Pancreas (tissue), 10 donors: ENCODE measurements at regions of chr13 and their contacts with region 1.

Region 1: GRCh38 chr13:26719356-26719945 is 41.1 kb downstream of the GPR12 start:
- DNase-seq: no peak
- ATAC-seq: no peak
- H3K4me3 ChIP-seq: no peak overlapping the region
- H3K27ac ChIP-seq: no peak overlapping the region
- H3K4me1 ChIP-seq: no peaks in the 10 kb centered on the region
- H3K27me3 ChIP-seq: no peaks in the 10 kb centered on the region
- CTCF ChIP-seq: no peak

Region 2: DNA sequence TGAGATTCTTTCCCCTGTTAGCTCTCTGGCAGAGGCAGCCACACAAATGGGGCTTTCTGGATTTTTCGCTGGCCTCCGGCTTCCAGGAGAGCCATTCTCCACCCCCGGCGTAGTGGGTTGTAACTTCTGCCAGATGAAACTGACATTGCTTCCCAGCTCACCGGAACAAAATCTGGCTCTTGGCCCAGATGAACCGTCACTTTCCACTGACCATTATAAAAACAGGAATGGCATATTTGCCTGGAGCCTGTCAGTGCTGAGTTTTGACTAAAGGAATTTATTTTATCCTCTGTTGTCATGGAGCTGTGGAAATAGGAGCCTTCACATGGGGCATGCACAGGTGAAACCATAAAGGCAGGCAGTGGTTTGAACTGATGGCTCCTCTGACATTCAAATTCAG is 161.7 kb after region 1 on chr13:
- intact Hi-C with region 1: no loop called
- DNase-seq: peak in 1 of 6 donors; percentile 23
- ATAC-seq: peak in 3 of 4 donors; percentile 11 to 51 (median 33)
- H3K4me3 ChIP-seq: no peak overlapping the region
- H3K27ac ChIP-seq: no peak overlapping the region
- H3K4me1 ChIP-seq: no peaks in the 10 kb centered on the region
- H3K27me3 ChIP-seq: no peaks in the 10 kb centered on the region
- CTCF ChIP-seq: no peak

Region 3: GRCh38 chr13:26929971-26930730 is 210.7 kb after region 1 on chr13:
- intact Hi-C with region 1: loop called in 1 of 3 experiments (anchors 10 kb)
- DNase-seq: peak in 5 of 6 donors; percentile 36 to 93 (median 64)
- ATAC-seq: peak; percentile 80 to 95 (median 90)
- H3K4me3 ChIP-seq: no peak overlapping the region
- H3K27ac ChIP-seq: no peak overlapping the region
- H3K4me1 ChIP-seq: no peaks in the 10 kb centered on the region
- H3K27me3 ChIP-seq: no peaks in the 10 kb centered on the region
- CTCF ChIP-seq: peak; percentile 90 to 97 (median 95)